ENCODE measurements at regions of chr19 and their contacts with region 1.

Region 1: GRCh38 chr19:38618590-38619360 is at the start of gene EIF3K:
- DNase-seq: peak; percentile 86 to 100 (median 97)
- ATAC-seq: peak; percentile 68
- H3K4me3 ChIP-seq: peak within 1 kb of the TSS; percentile 84 to 85
- H3K4me3 Mint-ChIP-seq: peak within 1 kb of the TSS; percentile 99
- H3K27ac ChIP-seq: peak within 1 kb of the TSS; percentile 89 to 96
- H3K27ac Mint-ChIP-seq: peak within 1 kb of the TSS; percentile 98
- H3K4me1 ChIP-seq: peaks cover 38% of the 10 kb centered on the region
- H3K4me1 Mint-ChIP-seq: peaks cover 49% of the 10 kb centered on the region
- H3K27me3 ChIP-seq: no peaks in the 10 kb centered on the region
- H3K27me3 Mint-ChIP-seq: no peaks in the 10 kb centered on the region
- CTCF ChIP-seq: no peak
- total RNA-seq, gene EIF3K: 313 to 315 TPM

Region 2: GRCh38 chr19:38374429-38375176 is 244.2 kb before region 1 on chr19 and contains the start of gene PSMD8:
- CTCF ChIA-PET with region 1: no interaction called
- POLR2A ChIA-PET with region 1: interaction called, 14 read pairs
- intact Hi-C with region 1: loop called (anchors 1 kb)
- DNase-seq: peak; percentile 95 to 100 (median 98)
- ATAC-seq: peak; percentile 97
- H3K4me3 ChIP-seq: peak within 1 kb of the TSS; percentile 71 to 84
- H3K4me3 Mint-ChIP-seq: peak within 1 kb of the TSS; percentile 99
- H3K27ac ChIP-seq: peak within 1 kb of the TSS; percentile 83 to 89
- H3K27ac Mint-ChIP-seq: peak within 1 kb of the TSS; percentile 96
- H3K4me1 ChIP-seq: peaks cover 19% of the 10 kb centered on the region
- H3K4me1 Mint-ChIP-seq: peaks cover 29% of the 10 kb centered on the region
- H3K27me3 ChIP-seq: no peaks in the 10 kb centered on the region
- H3K27me3 Mint-ChIP-seq: peaks cover 3% of the 10 kb centered on the region
- CTCF ChIP-seq: no peak
- total RNA-seq, gene PSMD8: 71.5 to 75.1 TPM

Region 3: GRCh38 chr19:38402967-38403861 is 215.6 kb before region 1 on chr19 and contains the start of gene FAM98C:
- CTCF ChIA-PET with region 1: interaction called, 13 read pairs
- POLR2A ChIA-PET with region 1: interaction called, 19 read pairs
- intact Hi-C with region 1: loop called (anchors 1 to 5 kb)
- DNase-seq: peak; percentile 95 to 99 (median 97)
- ATAC-seq: peak; percentile 96
- H3K4me3 ChIP-seq: peak within 1 kb of the TSS; percentile 76 to 95
- H3K4me3 Mint-ChIP-seq: peak within 1 kb of the TSS; percentile 94
- H3K27ac ChIP-seq: peak within 1 kb of the TSS; percentile 79 to 81
- H3K27ac Mint-ChIP-seq: peak within 1 kb of the TSS; percentile 98
- H3K4me1 ChIP-seq: peaks cover 11% of the 10 kb centered on the region
- H3K4me1 Mint-ChIP-seq: peaks cover 15% of the 10 kb centered on the region
- H3K27me3 ChIP-seq: no peaks in the 10 kb centered on the region
- H3K27me3 Mint-ChIP-seq: no peaks in the 10 kb centered on the region
- CTCF ChIP-seq: peak; percentile 95
- total RNA-seq, gene FAM98C: 28.2 to 29.3 TPM

Region 4: DNA sequence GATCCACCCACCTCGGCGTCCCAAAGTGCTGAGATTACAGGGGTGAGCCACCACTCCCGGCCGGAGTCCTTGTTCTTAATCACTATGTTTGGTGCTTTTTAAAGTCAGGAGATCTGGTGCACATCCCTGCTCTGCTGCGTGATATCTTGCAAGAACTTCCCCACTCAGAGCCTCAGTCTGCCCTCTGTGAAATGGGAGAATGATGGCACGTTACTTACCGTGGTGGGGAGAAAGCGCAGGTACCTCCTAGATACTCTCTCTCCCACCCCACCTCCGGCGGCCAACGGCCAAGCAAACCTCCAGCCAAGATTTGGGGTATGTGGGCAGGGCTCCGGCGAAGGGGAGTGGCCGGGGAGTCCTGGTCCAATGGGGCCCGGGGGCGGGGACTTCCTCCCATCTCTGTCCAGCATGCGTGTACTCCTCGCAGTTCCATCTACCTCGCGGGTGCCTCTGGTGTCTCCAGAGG is 185.5 kb before region 1 on chr19 and contains the start of gene RYR1:
- CTCF ChIA-PET with region 1: no interaction called
- POLR2A ChIA-PET with region 1: no interaction called
- intact Hi-C with region 1: no loop called
- DNase-seq: peak in 7 of 9 experiments; percentile 11 to 45 (median 37)
- ATAC-seq: peak; percentile 66
- H3K4me3 ChIP-seq: no peak within 1 kb of the TSS
- H3K4me3 Mint-ChIP-seq: peak within 1 kb of the TSS; percentile 31
- H3K27ac ChIP-seq: no peak within 1 kb of the TSS
- H3K27ac Mint-ChIP-seq: no peak within 1 kb of the TSS
- H3K4me1 ChIP-seq: peaks cover 3% of the 10 kb centered on the region
- H3K4me1 Mint-ChIP-seq: peaks cover 6% of the 10 kb centered on the region
- H3K27me3 ChIP-seq: peaks cover 5 to 9% of the 10 kb centered on the region in 2 experiments
- H3K27me3 Mint-ChIP-seq: peaks cover 31% of the 10 kb centered on the region
- CTCF ChIP-seq: no peak
- total RNA-seq, gene RYR1: 0.53 to 1.8 TPM

Region 5: GRCh38 chr19:38538793-38539528 is 79.8 kb before region 1 on chr19:
- CTCF ChIA-PET with region 1: interaction called, 13 read pairs
- POLR2A ChIA-PET with region 1: no interaction called
- intact Hi-C with region 1: loop called (anchors 2 to 5 kb)
- DNase-seq: peak in 5 of 9 experiments; percentile 24 to 84 (median 64)
- ATAC-seq: peak; percentile 88
- H3K4me3 ChIP-seq: peak overlapping the region in 1 of 2 experiments; percentile 11
- H3K4me3 Mint-ChIP-seq: peak overlapping the region; percentile 52
- H3K27ac ChIP-seq: no peak overlapping the region
- H3K27ac Mint-ChIP-seq: peak overlapping the region; percentile 85
- H3K4me1 ChIP-seq: peaks cover 36% of the 10 kb centered on the region
- H3K4me1 Mint-ChIP-seq: peaks cover 35% of the 10 kb centered on the region
- H3K27me3 ChIP-seq: no peaks in the 10 kb centered on the region
- H3K27me3 Mint-ChIP-seq: no peaks in the 10 kb centered on the region
- CTCF ChIP-seq: no peak

Region 6: DNA sequence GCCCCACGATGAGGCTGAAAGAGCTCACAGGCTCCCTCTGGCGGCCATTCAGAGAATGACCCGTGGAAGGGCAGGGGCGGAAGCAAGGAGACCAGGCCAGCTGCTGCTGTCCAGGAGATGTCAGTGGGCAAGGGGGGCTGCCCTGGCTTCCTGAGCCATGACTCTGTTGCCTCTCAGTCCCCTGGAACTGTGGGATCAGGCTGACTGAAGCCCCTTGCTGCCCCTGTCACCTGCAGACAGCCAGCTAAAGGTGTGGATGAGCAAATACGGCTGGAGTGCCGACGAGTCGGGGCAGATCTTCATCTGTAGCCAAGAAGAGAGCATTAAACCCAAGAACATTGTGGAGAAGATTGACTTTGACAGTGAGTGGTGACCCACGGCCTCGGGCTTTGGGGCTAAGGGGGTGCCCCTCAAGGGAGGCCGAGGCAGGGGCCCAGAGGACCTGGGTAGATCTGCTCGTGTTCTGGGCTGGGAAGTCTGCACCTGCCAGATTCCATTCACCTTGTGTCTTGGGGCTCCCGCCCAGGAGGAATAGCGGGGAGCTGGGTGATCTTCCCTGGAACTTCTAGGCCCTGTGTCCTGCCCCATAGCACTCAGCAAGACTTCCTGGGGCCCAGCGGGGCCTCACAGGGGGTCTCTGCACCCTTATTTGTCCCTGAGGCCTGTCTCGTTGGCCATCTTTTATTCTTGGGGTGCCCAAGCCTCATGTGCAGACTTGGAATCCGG is 16.1 kb after region 1 on chr19:
- CTCF ChIA-PET with region 1: interaction called, 12 read pairs
- POLR2A ChIA-PET with region 1: interaction called, 7 read pairs
- intact Hi-C with region 1: no loop called
- DNase-seq: peak; percentile 49 to 84 (median 73)
- ATAC-seq: peak; percentile 30
- H3K4me3 ChIP-seq: no peak overlapping the region
- H3K4me3 Mint-ChIP-seq: peak overlapping the region; percentile 47
- H3K27ac ChIP-seq: peak overlapping the region in 1 of 2 experiments; percentile 63
- H3K27ac Mint-ChIP-seq: peak overlapping the region; percentile 46
- H3K4me1 ChIP-seq: peaks cover 26% of the 10 kb centered on the region
- H3K4me1 Mint-ChIP-seq: peaks cover 24% of the 10 kb centered on the region
- H3K27me3 ChIP-seq: no peaks in the 10 kb centered on the region
- H3K27me3 Mint-ChIP-seq: no peaks in the 10 kb centered on the region
- CTCF ChIP-seq: peak; percentile 88

Region 7: DNA sequence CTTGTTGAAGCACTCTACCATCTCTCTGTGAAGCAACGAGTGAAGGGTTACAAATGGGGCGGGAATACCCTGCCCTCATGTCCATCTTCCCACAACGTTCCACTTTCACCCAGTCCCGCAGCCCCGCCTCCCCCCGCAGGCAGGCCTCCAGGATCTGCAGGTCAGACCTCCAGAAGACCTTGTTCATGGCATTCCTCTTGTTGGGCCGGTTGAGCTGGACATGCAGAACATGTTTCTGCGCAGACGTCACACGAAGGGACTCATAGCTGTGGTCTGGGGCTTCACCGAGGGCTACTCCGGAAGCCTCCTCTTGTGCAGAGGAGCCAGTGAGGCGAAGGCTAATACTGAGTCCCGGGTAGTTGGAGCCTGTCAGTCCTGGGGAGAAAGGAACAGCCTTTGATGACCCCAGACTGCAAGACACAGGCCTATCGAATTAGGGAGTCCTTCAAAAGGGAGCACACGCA is 212.4 kb after region 1 on chr19:
- CTCF ChIA-PET with region 1: no interaction called
- POLR2A ChIA-PET with region 1: no interaction called
- intact Hi-C with region 1: loop called in 1 of 2 experiments (anchors 5 kb)
- DNase-seq: peak in 1 of 9 experiments; percentile 63
- ATAC-seq: no peak
- H3K4me3 ChIP-seq: peak overlapping the region; percentile 74
- H3K4me3 Mint-ChIP-seq: peak overlapping the region; percentile 90
- H3K27ac ChIP-seq: peak overlapping the region; percentile 66 to 85
- H3K27ac Mint-ChIP-seq: peak overlapping the region; percentile 89
- H3K4me1 ChIP-seq: peaks cover 21% of the 10 kb centered on the region
- H3K4me1 Mint-ChIP-seq: peaks cover 37% of the 10 kb centered on the region
- H3K27me3 ChIP-seq: no peaks in the 10 kb centered on the region
- H3K27me3 Mint-ChIP-seq: no peaks in the 10 kb centered on the region
- CTCF ChIP-seq: no peak

Region 8: DNA sequence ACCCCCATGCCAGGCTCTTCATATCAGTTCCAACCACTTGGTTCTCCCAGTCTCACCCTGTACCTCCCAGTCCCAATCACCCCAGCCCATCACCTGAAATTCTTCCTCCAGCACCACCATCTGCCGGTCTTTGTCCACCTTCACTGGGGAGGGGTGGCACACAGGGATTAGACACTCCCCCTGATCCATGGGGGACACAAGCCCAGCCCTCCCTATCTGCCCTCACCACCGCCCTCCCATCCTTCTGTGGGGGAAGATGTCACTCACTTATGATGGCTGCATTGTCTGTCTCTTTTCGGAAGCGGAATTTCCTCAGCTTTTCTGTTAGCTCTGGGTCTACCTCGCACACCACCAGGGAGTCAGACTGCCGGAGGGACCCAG is 716.4 kb after region 1 on chr19:
- CTCF ChIA-PET with region 1: no interaction called
- POLR2A ChIA-PET with region 1: no interaction called
- intact Hi-C with region 1: loop called in 1 of 2 experiments (anchors 10 kb)
- DNase-seq: peak in 6 of 9 experiments; percentile 10 to 63 (median 38)
- ATAC-seq: peak; percentile 39
- H3K4me3 ChIP-seq: peak overlapping the region; percentile 68 to 96
- H3K4me3 Mint-ChIP-seq: peak overlapping the region; percentile 97
- H3K27ac ChIP-seq: peak overlapping the region; percentile 83 to 96
- H3K27ac Mint-ChIP-seq: peak overlapping the region; percentile 99
- H3K4me1 ChIP-seq: peaks cover 52% of the 10 kb centered on the region
- H3K4me1 Mint-ChIP-seq: peaks cover 60% of the 10 kb centered on the region
- H3K27me3 ChIP-seq: no peaks in the 10 kb centered on the region
- H3K27me3 Mint-ChIP-seq: no peaks in the 10 kb centered on the region
- CTCF ChIP-seq: no peak

Measured in CD8-positive, alpha-beta T cell (primary cell).